Right ventricle myocardium superior (tissue), 1 donor: ENCODE measurements at regions of chr5 and their contacts with region 1.

Region 1: DNA sequence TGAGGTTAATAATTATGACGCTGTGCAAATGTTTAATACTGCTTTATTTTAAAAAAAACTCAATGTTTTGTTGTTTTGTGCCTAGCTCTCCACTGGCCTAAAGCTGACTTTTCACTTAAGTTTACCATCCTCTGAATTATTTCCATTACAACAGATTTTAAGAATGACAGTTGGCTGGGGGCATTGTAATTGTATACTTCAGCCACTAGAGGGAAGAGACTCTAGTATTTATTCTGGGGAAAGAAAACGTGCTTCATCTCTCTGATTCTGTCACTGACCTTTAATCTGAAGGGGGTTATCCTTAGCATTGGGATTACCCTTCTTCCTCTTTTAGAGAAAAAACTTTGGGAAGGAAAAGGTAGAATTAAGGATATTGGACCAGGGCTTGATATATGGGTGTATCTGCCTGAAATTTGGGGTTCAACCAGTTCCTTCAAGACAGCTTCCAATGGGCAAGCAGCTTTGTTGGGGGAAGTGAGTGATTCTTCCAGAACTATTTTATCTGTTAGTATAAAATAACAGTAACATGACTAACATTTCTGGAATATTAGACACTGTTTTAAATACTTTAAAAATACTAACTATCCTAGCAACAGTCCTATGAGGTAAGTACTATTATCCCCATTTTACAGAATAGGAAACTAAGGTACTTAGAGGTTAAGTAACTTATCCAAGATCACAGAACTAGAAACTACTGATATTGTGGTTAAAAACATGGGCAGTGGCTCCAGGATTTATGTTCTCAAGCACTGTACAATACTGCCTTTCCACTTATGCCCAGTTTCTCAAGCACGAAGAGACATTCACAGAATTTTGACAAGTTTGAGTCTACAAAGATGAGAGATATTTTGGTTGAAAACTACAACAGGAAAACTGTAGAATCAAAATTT is 208.4 kb downstream of the CD180 start:
- DNase-seq: no peak
- ATAC-seq: peak; percentile 50

Region 2: DNA sequence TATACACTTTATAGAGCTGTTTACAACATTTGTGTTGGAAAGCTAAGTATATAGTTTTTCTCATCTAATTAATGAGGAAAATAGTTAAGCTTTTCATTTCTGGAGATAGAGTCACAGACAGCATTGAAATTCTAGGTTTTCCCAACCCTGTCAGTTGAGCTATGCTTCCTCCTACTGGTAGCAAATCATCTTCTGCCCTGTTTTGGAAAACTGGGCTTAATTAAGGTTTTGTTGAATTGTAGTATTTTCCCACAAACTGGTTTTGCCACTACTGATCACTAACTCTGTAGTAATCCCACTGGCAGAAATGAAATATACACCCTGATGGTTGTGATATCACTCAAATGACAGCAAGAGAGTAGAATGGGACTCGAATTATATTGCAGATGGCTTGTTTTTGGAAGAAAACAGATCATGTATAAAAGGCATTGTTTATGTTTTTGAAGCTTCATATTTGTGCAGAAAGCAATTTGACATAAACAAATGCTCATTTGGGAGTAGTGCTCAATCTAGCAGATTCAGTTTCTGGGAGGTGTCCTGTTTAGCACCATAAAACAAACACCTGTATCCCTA is 161.8 kb after region 1 on chr5:
- intact Hi-C with region 1: loop called (anchors 5 kb)
- DNase-seq: no peak
- ATAC-seq: peak; percentile 35

Region 3: GRCh38 chr5:67724412-67725135 is 736.4 kb after region 1 on chr5:
- intact Hi-C with region 1: no loop called
- DNase-seq: no peak
- ATAC-seq: no peak